GM12878 (cell line): ENCODE measurements at regions of chr1 and their contacts with region 1.

Region 1: DNA sequence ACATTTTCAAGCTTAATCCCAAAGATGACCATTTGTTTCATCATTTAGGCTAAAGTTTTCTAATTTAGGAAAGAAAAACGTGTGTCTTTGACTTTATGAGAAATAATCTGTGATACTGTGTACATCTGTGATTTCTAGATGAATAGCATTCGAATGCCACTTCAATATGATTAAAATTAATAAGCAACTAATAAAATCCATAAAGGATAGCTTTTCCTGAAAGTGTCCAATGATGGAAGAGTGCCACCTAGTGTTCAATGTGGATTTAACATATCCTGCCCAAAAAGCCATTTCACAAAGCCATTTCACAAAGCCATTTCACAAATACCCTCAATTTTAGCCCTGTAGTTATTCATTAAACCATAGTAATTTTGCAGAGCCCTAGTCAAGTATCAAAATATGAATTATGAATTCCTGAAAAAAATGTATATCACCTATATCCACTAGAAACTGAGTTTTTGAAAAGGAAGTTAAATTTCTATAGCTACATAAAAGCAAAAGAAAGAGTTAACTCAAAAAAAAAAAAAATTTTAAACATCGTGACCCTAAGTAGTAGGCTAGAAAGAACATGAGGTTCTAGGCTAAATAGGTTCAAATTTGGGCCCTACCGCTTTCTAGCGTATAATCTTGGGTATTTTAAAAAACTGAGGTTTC is 19.1 kb downstream of the NME7 start:
- DNase-seq: peak; percentile 19
- ATAC-seq: peak; percentile 61
- H3K4me3 ChIP-seq: no peak overlapping the region
- H3K27ac ChIP-seq: no peak overlapping the region
- H3K4me1 ChIP-seq: no peaks in the 10 kb centered on the region
- H3K27me3 ChIP-seq: no peaks in the 10 kb centered on the region
- CTCF ChIP-seq: peak; percentile 57 to 78 (median 62)
- EP300 ChIP-seq: no peak
- POLR2A ChIP-seq: no peak
- RAD21 ChIP-seq: peak; percentile 92

Region 2: DNA sequence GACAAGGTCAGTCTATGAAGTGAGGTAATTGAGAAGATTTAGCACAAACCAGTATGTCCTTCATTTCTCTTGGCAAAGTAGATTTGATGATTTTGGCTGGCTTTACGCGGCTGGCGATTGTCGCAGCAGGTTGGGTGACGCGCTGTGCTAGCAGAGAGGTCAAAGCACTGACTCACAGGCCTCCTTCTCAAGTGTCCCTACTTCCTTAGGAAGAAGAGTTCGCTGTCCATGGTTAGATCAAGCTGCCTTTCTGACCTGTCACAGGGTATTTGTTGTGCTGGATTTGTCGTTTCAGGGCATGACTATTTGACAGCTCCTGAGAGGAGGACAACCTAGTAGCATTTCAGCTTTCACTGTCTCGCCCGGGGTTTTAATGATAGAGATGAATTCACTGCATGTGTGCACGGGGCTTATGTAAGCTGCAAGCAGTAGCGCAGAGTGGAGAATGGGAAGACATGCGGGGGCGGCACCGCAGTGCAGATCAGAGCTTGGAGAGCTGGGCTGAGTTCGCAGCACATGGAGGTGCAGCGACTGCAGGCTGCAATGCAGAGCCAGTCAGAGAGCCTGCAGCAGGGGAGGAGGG is 739.3 kb before region 1 on chr1:
- CTCF ChIA-PET with region 1: interaction called, 240 read pairs
- POLR2A ChIA-PET with region 1: no interaction called
- RAD21 ChIA-PET with region 1: interaction called, 135 read pairs
- SMC1A ChIA-PET with region 1: interaction called, 172 read pairs
- in situ Hi-C with region 1: loop called (anchors 5 kb)
- intact Hi-C with region 1: no loop called
- DNase-seq: no peak
- ATAC-seq: no peak
- H3K4me3 ChIP-seq: no peak overlapping the region
- H3K27ac ChIP-seq: no peak overlapping the region
- H3K4me1 ChIP-seq: no peaks in the 10 kb centered on the region
- H3K27me3 ChIP-seq: peaks cover 0 to 5% of the 10 kb centered on the region in 2 experiments; a peak in 2 of 4 replicates
- CTCF ChIP-seq: no peak
- EP300 ChIP-seq: no peak
- POLR2A ChIP-seq: no peak
- RAD21 ChIP-seq: no peak

Region 3: GRCh38 chr1:168637350-168637991 is 711.0 kb before region 1 on chr1:
- CTCF ChIA-PET with region 1: interaction called, 112 read pairs
- POLR2A ChIA-PET with region 1: interaction called, 3 read pairs
- RAD21 ChIA-PET with region 1: interaction called, 58 read pairs
- SMC1A ChIA-PET with region 1: interaction called, 72 read pairs
- in situ Hi-C with region 1: no loop called
- intact Hi-C with region 1: loop called (anchors 2 kb)
- DNase-seq: no peak
- ATAC-seq: peak; percentile 92
- H3K4me3 ChIP-seq: no peak overlapping the region
- H3K27ac ChIP-seq: no peak overlapping the region
- H3K4me1 ChIP-seq: no peaks in the 10 kb centered on the region
- H3K27me3 ChIP-seq: no peaks in the 10 kb centered on the region
- CTCF ChIP-seq: peak; percentile 64 to 80 (median 73)
- EP300 ChIP-seq: no peak
- POLR2A ChIP-seq: no peak
- RAD21 ChIP-seq: peak; percentile 65

Region 4: GRCh38 chr1:169133801-169134502 is 214.6 kb before region 1 on chr1:
- CTCF ChIA-PET with region 1: interaction called, 23 read pairs
- POLR2A ChIA-PET with region 1: no interaction called
- RAD21 ChIA-PET with region 1: interaction called, 4 read pairs
- SMC1A ChIA-PET with region 1: interaction called, 6 read pairs
- in situ Hi-C with region 1: no loop called
- intact Hi-C with region 1: no loop called
- DNase-seq: no peak
- ATAC-seq: peak; percentile 49; the same call in 1 of the 3 replicates
- H3K4me3 ChIP-seq: no peak overlapping the region
- H3K27ac ChIP-seq: no peak overlapping the region
- H3K4me1 ChIP-seq: no peaks in the 10 kb centered on the region
- H3K27me3 ChIP-seq: no peaks in the 10 kb centered on the region
- CTCF ChIP-seq: peak in 2 of 3 experiments; percentile 30 to 58; a peak in 3 of 6 replicates
- EP300 ChIP-seq: no peak
- POLR2A ChIP-seq: no peak
- RAD21 ChIP-seq: peak; percentile 65

Region 5: GRCh38 chr1:169309178-169310166 is 39.0 kb before region 1 on chr1:
- CTCF ChIA-PET with region 1: interaction called, 14 read pairs
- POLR2A ChIA-PET with region 1: no interaction called
- RAD21 ChIA-PET with region 1: no interaction called
- SMC1A ChIA-PET with region 1: interaction called, 3 read pairs
- in situ Hi-C with region 1: no loop called
- intact Hi-C with region 1: no loop called
- DNase-seq: peak; percentile 11
- ATAC-seq: peak; percentile 88
- H3K4me3 ChIP-seq: peak overlapping the region; percentile 23; the same call in 1 of the 2 replicates
- H3K27ac ChIP-seq: no peak overlapping the region; the same call in 1 of the 2 replicates
- H3K4me1 ChIP-seq: no peaks in the 10 kb centered on the region
- H3K27me3 ChIP-seq: no peaks in the 10 kb centered on the region
- CTCF ChIP-seq: no peak
- EP300 ChIP-seq: no peak
- POLR2A ChIP-seq: no peak
- RAD21 ChIP-seq: no peak

Region 6: DNA sequence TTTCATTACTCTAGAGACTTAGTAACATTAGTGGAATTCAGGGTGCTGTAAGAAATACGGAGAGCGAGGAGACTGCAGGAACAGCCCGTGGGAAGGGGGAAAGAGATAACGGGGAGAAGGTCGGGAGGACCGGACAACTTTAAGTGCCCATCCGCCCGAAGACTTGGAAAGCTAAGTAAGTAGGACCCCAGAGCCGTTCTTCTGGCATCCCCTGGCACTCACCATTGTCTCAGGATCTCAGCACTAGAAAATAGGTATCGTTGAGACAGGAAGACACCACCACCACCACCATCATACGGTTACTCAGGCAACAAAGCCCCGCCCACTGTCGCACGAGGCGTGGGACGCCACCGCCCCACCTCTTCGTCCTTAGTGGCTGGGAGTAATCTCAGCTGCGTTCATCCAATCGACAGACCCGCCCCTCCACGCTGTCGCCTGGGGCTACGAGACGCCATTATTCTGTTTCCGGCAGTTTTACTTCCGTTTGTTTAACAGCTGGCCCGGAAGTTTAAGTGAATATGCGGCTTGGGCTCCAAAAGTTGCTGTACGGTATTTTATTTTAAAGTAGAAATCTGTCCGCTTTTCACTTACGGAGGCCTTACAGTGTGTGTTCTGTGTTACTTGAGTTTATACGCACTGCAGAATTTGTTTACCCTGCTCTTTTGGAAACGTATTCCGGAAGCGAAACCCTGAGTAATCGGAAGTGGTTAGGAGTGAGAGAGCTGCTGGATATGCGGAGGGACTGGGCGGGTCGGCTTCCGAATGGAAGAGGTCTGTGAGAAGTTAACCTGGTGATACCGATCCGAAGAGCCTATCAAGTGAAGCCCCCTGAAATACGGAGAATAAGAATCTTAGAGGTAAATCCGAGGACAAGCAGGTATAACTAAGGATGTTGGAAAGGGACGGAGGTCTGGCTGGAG is 19.2 kb after region 1 on chr1 and contains the starts of genes BLZF1 and NME7:
- CTCF ChIA-PET with region 1: interaction called, 13 read pairs
- POLR2A ChIA-PET with region 1: interaction called, 3 read pairs
- RAD21 ChIA-PET with region 1: interaction called, 8 read pairs
- SMC1A ChIA-PET with region 1: interaction called, 9 read pairs
- in situ Hi-C with region 1: no loop called
- intact Hi-C with region 1: no loop called
- DNase-seq: peak; percentile 94
- ATAC-seq: peak; percentile 98
- H3K4me3 ChIP-seq: peak within 1 kb of the TSS; percentile 93
- H3K27ac ChIP-seq: peak within 1 kb of the TSS; percentile 11
- H3K4me1 ChIP-seq: peaks cover 4% of the 10 kb centered on the region; the same call in 1 of the 2 replicates
- H3K27me3 ChIP-seq: no peaks in the 10 kb centered on the region
- CTCF ChIP-seq: no peak
- EP300 ChIP-seq: no peak
- POLR2A ChIP-seq: peak; percentile 11; the same call in 1 of the 2 replicates
- RAD21 ChIP-seq: no peak
- polyA plus RNA-seq, gene BLZF1: 6.4 to 9.4 TPM
- polyA plus RNA-seq, gene NME7: 8.0 to 8.1 TPM

Region 7: GRCh38 chr1:169427081-169427641 is 78.7 kb after region 1 on chr1 and contains the start of gene CCDC181:
- CTCF ChIA-PET with region 1: no interaction called
- POLR2A ChIA-PET with region 1: no interaction called
- RAD21 ChIA-PET with region 1: no interaction called
- SMC1A ChIA-PET with region 1: no interaction called
- in situ Hi-C with region 1: no loop called
- intact Hi-C with region 1: no loop called
- DNase-seq: peak; percentile 8
- ATAC-seq: peak; percentile 87
- H3K4me3 ChIP-seq: no peak within 1 kb of the TSS
- H3K27ac ChIP-seq: no peak within 1 kb of the TSS
- H3K4me1 ChIP-seq: no peaks in the 10 kb centered on the region
- H3K27me3 ChIP-seq: peaks cover 0 to 4% of the 10 kb centered on the region in 2 experiments; a peak in 2 of 4 replicates
- CTCF ChIP-seq: no peak
- EP300 ChIP-seq: no peak
- POLR2A ChIP-seq: no peak
- RAD21 ChIP-seq: no peak
- polyA plus RNA-seq, gene CCDC181: not detected

Region 8: DNA sequence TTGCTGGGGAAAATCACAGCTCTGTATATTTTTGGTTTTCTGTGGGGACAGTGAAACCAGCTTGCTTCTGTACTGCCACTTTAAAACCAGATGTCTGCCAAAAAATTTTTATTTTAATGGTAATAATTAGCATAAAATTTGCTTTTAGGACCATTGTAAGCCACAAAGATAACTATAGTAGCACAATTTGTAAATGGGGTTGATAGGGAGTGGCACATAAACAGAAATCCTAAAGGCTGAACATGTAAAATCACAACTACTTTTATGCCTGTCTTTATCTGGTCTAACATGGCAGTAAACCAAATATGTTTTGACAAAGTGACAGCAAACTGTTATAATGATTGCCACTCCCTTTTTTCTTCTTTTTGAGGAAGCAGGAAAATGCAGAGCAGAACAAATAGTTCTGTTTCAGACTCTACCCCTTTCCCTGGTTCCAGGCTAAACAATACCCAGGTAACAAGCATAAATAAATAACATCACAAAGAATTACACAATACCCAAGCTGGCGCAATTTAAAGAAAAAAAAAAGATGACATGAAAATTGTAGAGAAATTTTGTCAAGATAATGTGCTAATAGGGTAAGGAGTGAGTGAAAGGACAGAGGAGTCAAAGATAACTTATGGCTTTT is 102.8 kb after region 1 on chr1:
- CTCF ChIA-PET with region 1: no interaction called
- POLR2A ChIA-PET with region 1: no interaction called
- RAD21 ChIA-PET with region 1: no interaction called
- SMC1A ChIA-PET with region 1: no interaction called
- in situ Hi-C with region 1: no loop called
- intact Hi-C with region 1: no loop called
- DNase-seq: no peak
- ATAC-seq: no peak
- H3K4me3 ChIP-seq: no peak overlapping the region
- H3K27ac ChIP-seq: no peak overlapping the region
- H3K4me1 ChIP-seq: no peaks in the 10 kb centered on the region
- H3K27me3 ChIP-seq: no peaks in the 10 kb centered on the region
- CTCF ChIP-seq: no peak
- EP300 ChIP-seq: no peak
- POLR2A ChIP-seq: no peak
- RAD21 ChIP-seq: no peak